ENCODE measurements at regions of chr7 and their contacts with region 1.

Region 1: DNA sequence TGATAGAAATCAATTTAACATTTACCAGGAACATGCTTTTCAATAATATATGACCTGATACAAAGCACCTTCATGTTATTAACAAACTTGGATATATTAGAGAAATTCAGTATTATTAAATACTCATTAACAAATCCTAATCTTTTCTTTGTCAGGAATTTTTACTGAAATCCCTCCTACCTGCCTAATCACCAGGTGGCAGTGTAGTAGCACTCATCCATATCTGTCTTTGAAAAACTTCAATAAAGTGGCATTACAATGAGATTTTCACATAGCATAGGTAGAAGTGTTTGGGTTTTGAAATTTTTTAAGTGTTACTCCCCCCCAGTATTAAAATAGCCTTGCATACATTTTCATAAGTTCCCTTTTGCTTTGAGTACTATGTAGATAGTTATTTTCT is 1246.6 kb upstream of the LRRN3 start:
- DNase-seq: no peak
- H3K4me3 ChIP-seq: no peak overlapping the region
- H3K27ac ChIP-seq: no peak overlapping the region
- H3K4me1 ChIP-seq: no peaks in the 10 kb centered on the region
- H3K27me3 ChIP-seq: no peaks in the 10 kb centered on the region
- CTCF ChIP-seq: peak in 3 of 4 experiments; percentile 46 to 73 (median 63)
- POLR2A ChIP-seq: no peak

Region 2: DNA sequence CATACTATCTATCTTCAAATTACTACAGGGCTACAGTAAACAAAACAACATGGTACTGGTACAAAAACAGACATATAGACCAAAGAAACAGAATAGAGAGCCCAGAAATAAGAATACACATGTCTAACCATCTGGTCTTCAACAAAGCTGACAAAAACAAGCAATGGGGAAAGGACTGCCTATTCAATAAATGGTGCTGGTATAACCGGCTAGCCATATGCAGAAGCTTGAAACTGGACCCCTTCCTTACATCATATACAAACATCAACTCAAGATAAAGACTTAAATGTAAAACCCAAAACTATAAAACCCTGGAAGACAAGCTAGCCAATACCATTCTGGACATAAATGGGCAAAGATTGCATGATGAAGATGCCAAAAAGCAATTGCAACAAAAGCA is 131.0 kb before region 1 on chr7:
- intact Hi-C with region 1: no loop called
- DNase-seq: no peak
- H3K4me3 ChIP-seq: no peak overlapping the region
- H3K27ac ChIP-seq: no peak overlapping the region
- H3K4me1 ChIP-seq: no peaks in the 10 kb centered on the region
- H3K27me3 ChIP-seq: no peaks in the 10 kb centered on the region
- CTCF ChIP-seq: no peak
- POLR2A ChIP-seq: no peak

Region 3: GRCh38 chr7:109915670-109916069 is 71.3 kb after region 1 on chr7:
- intact Hi-C with region 1: no loop called
- DNase-seq: no peak
- H3K4me3 ChIP-seq: no peak overlapping the region
- H3K27ac ChIP-seq: no peak overlapping the region
- H3K4me1 ChIP-seq: no peaks in the 10 kb centered on the region
- H3K27me3 ChIP-seq: no peaks in the 10 kb centered on the region
- CTCF ChIP-seq: no peak
- POLR2A ChIP-seq: no peak

Region 4: DNA sequence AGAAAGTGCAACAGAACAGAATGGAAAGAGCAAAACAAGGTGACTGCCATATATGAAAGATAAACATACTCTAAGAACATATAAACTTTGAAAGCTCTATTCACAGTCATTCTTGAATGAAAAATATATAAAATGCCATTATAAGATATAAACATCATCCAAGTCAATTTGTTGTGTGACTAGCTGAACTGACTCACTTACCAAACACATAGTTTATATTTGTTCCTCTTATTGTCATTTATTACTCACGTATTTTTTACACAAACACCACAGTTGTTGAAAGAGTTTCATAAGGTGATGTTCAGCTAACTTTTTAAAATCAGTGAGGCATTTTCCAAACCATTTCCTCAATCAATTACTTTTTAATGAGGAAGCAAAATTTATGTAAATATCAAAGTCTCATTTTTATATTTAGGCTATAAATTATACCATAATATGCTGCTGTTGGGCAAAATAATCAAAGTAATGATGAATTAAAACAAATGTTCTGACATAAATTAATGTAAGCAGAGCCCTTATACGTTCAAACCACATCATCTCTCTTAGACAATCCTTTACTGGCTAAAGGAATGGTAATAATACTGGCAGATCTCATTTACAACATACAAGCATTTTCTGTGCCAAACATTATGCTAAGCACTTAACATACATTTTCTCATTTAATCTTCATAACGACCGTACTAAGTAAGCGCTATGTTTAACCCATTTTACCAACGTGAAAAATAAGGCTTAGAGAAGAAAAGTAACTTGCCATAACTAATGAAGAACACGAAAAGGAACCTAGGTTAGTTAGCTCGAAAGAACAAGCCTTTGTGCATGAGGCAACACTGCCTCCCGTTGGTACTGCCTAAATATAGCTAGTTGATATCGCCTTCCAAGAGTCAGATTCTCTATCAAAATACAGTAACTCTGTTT is 1253.9 kb after region 1 on chr7:
- intact Hi-C with region 1: loop called (anchors 10 kb)
- DNase-seq: no peak
- H3K4me3 ChIP-seq: no peak overlapping the region
- H3K27ac ChIP-seq: no peak overlapping the region
- H3K4me1 ChIP-seq: no peaks in the 10 kb centered on the region
- H3K27me3 ChIP-seq: no peaks in the 10 kb centered on the region
- CTCF ChIP-seq: peak in 2 of 4 experiments; percentile 14 to 35
- POLR2A ChIP-seq: no peak

Region 5: GRCh38 chr7:111486472-111487142 is 1642.2 kb after region 1 on chr7:
- intact Hi-C with region 1: loop called (anchors 10 kb)
- DNase-seq: no peak
- H3K4me3 ChIP-seq: no peak overlapping the region
- H3K27ac ChIP-seq: no peak overlapping the region
- H3K4me1 ChIP-seq: peaks cover 5% of the 10 kb centered on the region
- H3K27me3 ChIP-seq: no peaks in the 10 kb centered on the region
- CTCF ChIP-seq: peak in 3 of 4 experiments; percentile 54 to 75 (median 73)
- POLR2A ChIP-seq: no peak

Measured in prostate gland (tissue), 2 donors.